Transverse colon (tissue), 4 donors: ENCODE measurements at regions of chr7 and their contacts with region 1.

Region 1: DNA sequence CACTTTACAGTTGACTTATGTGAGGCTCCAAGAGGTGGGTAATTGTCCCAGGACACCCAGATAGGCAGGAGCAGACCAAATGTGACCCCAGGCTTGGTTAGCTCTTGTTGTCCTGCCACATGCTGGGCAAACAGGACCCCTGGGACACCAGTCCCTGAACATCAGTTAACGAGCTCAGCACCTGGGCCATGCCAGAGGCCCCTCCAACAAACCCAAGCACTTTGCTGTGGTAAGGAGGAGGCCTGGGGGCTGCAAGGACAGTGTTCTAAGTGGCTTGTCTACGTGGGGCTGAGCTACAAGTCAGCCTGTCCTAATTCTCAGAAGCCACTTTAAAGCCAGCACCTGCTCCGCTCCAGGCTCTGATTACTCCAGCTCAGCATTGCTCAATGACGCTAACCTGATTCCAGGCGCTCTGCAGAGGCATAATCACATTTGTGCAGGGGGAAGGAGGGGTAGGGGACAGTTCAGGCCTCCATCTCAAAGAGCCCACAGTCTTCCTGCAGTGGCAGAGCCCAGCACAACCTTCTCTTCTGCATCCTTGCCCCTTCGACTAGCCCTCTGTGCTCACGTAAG is 57.2 kb downstream of the DDC start:
- DNase-seq: no peak
- H3K4me3 ChIP-seq: no peak overlapping the region
- H3K27ac ChIP-seq: no peak overlapping the region
- H3K4me1 ChIP-seq: peaks cover 0 to 13% (median 4%) of the 10 kb centered on the region in 4 donors
- H3K27me3 ChIP-seq: no peaks in the 10 kb centered on the region
- CTCF ChIP-seq: no peak
- EP300 ChIP-seq: no peak
- POLR2A ChIP-seq: no peak

Region 2: DNA sequence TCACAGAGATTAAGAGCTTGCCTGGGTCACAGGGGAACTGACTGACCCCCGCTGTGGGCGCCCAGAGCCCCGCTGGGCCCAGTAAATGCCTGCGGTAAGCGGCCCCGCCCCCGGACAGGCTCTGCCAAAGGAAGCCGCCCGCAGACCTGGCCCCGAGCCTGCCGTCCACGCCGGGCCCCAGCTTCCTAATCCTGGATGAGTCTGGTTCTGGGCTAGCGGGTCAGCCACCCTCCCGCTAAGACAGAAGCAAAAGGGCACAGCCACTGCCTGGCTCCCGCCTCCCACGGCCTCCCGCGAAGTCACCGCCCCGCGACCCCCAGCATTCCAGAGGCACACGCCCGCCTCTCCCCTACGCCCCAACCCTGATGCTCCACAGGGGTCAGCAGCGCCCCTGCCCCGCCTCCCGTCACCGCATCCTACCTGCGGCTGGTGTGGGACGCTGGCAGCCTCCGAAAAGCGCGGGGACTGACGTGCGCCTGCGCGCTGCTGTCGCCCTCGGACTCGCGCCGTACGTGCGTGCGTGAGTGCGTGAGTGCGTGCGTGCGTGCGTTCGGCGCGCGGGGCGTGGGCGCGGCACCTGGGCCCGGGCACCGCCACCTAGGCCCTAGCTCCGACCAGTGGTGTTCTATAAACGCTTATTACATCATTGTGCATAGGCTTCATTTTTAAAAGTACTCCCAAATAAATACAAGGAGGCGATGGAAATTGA is 57.9 kb before region 1 on chr7 and contains the start of gene FIGNL1:
- in situ Hi-C with region 1: no loop called
- intact Hi-C with region 1: loop called (anchors 2 kb)
- DNase-seq: peak; percentile 79
- H3K4me3 ChIP-seq: peak within 1 kb of the TSS; percentile 49 to 87 (median 72)
- H3K27ac ChIP-seq: peak within 1 kb of the TSS; percentile 59 to 85 (median 76)
- H3K4me1 ChIP-seq: peaks cover 0 to 16% (median 13%) of the 10 kb centered on the region in 4 donors
- H3K27me3 ChIP-seq: no peaks in the 10 kb centered on the region
- CTCF ChIP-seq: no peak
- EP300 ChIP-seq: no peak
- POLR2A ChIP-seq: peak; percentile 46
- total RNA-seq, gene FIGNL1: 0.80 to 6.2 (median 3.6) TPM